HepG2 (cell line): ENCODE measurements at regions of chr14 and their contacts with region 1.

Region 1: GRCh38 chr14:70622111-70622712 is 19.5 kb upstream of the TTC9 start:
- DNase-seq: peak; percentile 64
- ATAC-seq: peak; percentile 92
- H3K4me3 ChIP-seq: no peak overlapping the region
- H3K27ac ChIP-seq: no peak overlapping the region
- H3K4me1 ChIP-seq: no peaks in the 10 kb centered on the region
- H3K27me3 ChIP-seq: 0 out of 5 replicates have a peak, but pooled peaks cover 0 to 4% of the 10 kb centered on the region in 2 experiments
- CTCF ChIP-seq: peak; percentile 82
- EP300 ChIP-seq: no peak
- POLR2A ChIP-seq: no peak
- RAD21 ChIP-seq: peak; percentile 81

Region 2: DNA sequence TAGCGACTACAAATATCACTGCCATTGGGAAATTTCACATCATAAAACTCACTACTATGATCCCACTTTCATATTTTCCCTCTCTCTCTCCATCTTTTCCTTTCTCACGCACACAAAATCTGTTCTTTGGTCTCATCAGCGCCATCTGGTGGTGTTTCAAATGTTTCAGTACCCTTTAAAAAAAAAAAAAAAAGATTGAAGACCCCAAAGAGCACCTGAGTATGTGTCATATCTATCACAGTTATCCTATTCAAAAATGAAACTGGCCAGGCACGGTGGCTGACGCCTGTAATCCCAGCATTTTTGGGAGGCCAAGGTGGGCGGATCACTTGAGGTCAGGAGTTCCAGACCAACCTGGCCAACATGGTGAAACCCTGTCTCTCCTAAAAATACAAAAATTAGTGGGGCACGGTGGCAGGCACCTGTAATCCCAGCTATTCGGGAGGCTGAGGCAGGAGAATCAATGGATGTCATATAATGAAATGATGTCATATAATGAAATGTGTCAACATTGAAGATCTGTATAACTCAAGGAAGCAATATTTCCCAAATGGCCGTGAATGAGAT is 91.9 kb after region 1 on chr14:
- CTCF ChIA-PET with region 1: interaction called, 34 read pairs
- POLR2A ChIA-PET with region 1: no interaction called
- in situ Hi-C with region 1: no loop called
- intact Hi-C with region 1: loop called (anchors 1 kb)
- DNase-seq: peak; percentile 57
- ATAC-seq: no peak
- H3K4me3 ChIP-seq: no peak overlapping the region
- H3K27ac ChIP-seq: no peak overlapping the region
- H3K4me1 ChIP-seq: peaks cover 33% of the 10 kb centered on the region
- H3K27me3 ChIP-seq: peaks cover 0 to 2% of the 10 kb centered on the region in 2 experiments; a peak in 1 of 5 replicates
- CTCF ChIP-seq: peak; percentile 51
- EP300 ChIP-seq: no peak
- POLR2A ChIP-seq: no peak
- RAD21 ChIP-seq: no peak

Region 3: DNA sequence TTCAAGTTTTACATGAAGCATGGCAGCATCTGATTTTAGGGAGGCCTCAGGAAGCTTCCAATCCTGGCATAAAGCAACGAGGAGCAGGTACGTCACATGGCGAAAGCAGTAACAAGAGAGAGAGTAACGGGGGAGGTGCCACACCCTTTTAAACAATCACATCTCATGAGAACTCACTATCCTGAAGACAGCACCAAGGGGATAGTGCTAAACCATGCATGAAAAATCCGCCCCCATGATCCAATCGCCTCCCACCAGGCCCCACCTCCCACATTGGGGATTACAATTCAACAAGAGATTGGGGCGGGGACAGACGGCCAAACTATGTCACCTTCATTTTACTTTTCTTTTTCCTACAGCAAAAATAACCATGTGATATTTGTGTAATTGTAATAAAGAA is 194.3 kb after region 1 on chr14:
- CTCF ChIA-PET with region 1: interaction called, 52 read pairs
- POLR2A ChIA-PET with region 1: no interaction called
- in situ Hi-C with region 1: loop called (anchors 5 kb)
- intact Hi-C with region 1: loop called (anchors 1 kb)
- DNase-seq: no peak
- ATAC-seq: no peak
- H3K4me3 ChIP-seq: no peak overlapping the region
- H3K27ac ChIP-seq: no peak overlapping the region
- H3K4me1 ChIP-seq: peaks cover 28% of the 10 kb centered on the region
- H3K27me3 ChIP-seq: peaks cover 0 to 22% of the 10 kb centered on the region in 2 experiments; a peak in 2 of 5 replicates
- CTCF ChIP-seq: no peak
- EP300 ChIP-seq: no peak
- POLR2A ChIP-seq: no peak
- RAD21 ChIP-seq: no peak

Region 4: GRCh38 chr14:70821584-70822529 is 199.6 kb after region 1 on chr14:
- CTCF ChIA-PET with region 1: interaction called, 52 read pairs
- POLR2A ChIA-PET with region 1: no interaction called
- in situ Hi-C with region 1: loop called (anchors 5 kb)
- intact Hi-C with region 1: loop called (anchors 1 kb)
- DNase-seq: no peak
- ATAC-seq: peak; percentile 69
- H3K4me3 ChIP-seq: peak overlapping the region; percentile 58 to 83 (median 67)
- H3K27ac ChIP-seq: no peak overlapping the region
- H3K4me1 ChIP-seq: peaks cover 17% of the 10 kb centered on the region
- H3K27me3 ChIP-seq: peaks cover 0 to 38% of the 10 kb centered on the region in 2 experiments; a peak in 3 of 5 replicates
- CTCF ChIP-seq: no peak
- EP300 ChIP-seq: no peak
- POLR2A ChIP-seq: no peak
- RAD21 ChIP-seq: no peak

Region 5: GRCh38 chr14:70972107-70972976 is 350.1 kb after region 1 on chr14:
- CTCF ChIA-PET with region 1: interaction called, 5 read pairs
- POLR2A ChIA-PET with region 1: no interaction called
- in situ Hi-C with region 1: loop called (anchors 25 kb)
- intact Hi-C with region 1: loop called (anchors 5 kb)
- DNase-seq: peak; percentile 67
- ATAC-seq: peak; percentile 80
- H3K4me3 ChIP-seq: no peak overlapping the region
- H3K27ac ChIP-seq: no peak overlapping the region
- H3K4me1 ChIP-seq: no peaks in the 10 kb centered on the region
- H3K27me3 ChIP-seq: no peaks in the 10 kb centered on the region
- CTCF ChIP-seq: peak; percentile 86
- EP300 ChIP-seq: no peak
- POLR2A ChIP-seq: no peak
- RAD21 ChIP-seq: peak; percentile 60; the same call in 1 of the 2 replicates